ENCODE measurements at regions of chr7 and their contacts with region 1.

Region 1: GRCh38 chr7:64562626-64563275 is at the start of gene ZNF680:
- DNase-seq: peak; percentile 79 to 95 (median 84)
- ATAC-seq: peak; percentile 98
- H3K4me3 ChIP-seq: peak within 1 kb of the TSS; percentile 93
- H3K4me3 Mint-ChIP-seq: peak within 1 kb of the TSS; percentile 100
- H3K27ac ChIP-seq: peak within 1 kb of the TSS; percentile 41
- H3K27ac Mint-ChIP-seq: peak within 1 kb of the TSS; percentile 88
- H3K4me1 ChIP-seq: peaks cover 21% of the 10 kb centered on the region
- H3K4me1 Mint-ChIP-seq: peaks cover 41% of the 10 kb centered on the region
- H3K27me3 ChIP-seq: no peaks in the 10 kb centered on the region
- H3K27me3 Mint-ChIP-seq: no peaks in the 10 kb centered on the region
- CTCF ChIP-seq: no peak
- total RNA-seq, gene ZNF680: 8.3 to 8.9 TPM

Region 2: GRCh38 chr7:64650971-64651781 is 88.4 kb after region 1 on chr7:
- CTCF ChIA-PET with region 1: no interaction called
- POLR2A ChIA-PET with region 1: no interaction called
- intact Hi-C with region 1: no loop called
- DNase-seq: no peak
- ATAC-seq: no peak
- H3K4me3 ChIP-seq: no peak overlapping the region
- H3K4me3 Mint-ChIP-seq: no peak overlapping the region
- H3K27ac ChIP-seq: no peak overlapping the region
- H3K27ac Mint-ChIP-seq: no peak overlapping the region
- H3K4me1 ChIP-seq: no peaks in the 10 kb centered on the region
- H3K4me1 Mint-ChIP-seq: no peaks in the 10 kb centered on the region
- H3K27me3 ChIP-seq: no peaks in the 10 kb centered on the region
- H3K27me3 Mint-ChIP-seq: no peaks in the 10 kb centered on the region
- CTCF ChIP-seq: no peak

Region 3: DNA sequence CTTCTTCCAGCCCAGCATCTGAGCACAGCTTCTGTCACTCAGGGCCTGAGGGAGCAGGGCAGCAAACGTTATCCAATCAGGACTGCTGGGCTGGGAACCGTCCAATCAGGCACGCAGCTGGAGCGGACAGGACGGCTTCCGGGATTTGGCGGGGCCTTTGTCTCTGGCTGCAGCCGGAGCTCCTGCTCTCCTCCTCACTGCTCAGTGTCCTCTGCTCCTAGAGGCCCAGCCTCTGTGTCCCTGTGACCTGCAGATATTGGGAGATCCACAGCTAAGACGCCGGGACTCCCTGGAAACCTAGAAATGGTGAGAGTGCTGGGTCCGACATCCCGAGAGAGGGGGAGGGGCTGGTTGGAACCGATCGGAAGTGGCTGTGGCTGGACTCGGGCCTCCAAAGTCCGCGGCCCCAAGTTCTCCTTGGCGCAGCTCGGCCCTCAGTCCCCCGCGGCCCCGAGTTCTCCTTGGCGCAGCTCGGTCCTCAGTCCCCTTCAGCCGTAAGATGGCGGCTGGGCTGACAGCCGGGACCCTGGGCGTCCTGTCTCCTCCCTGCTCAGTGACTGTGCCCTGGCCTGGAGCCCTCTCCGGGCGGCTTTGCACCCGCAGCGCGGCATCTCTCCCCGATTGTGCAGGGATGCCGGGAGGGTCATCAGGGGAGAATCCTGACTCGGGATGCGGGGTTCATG is 103.4 kb after region 1 on chr7 and contains the start of gene ZNF107:
- CTCF ChIA-PET with region 1: no interaction called
- POLR2A ChIA-PET with region 1: interaction called, 47 read pairs
- intact Hi-C with region 1: loop called (anchors 5 kb)
- DNase-seq: peak; percentile 71 to 96 (median 79)
- ATAC-seq: peak; percentile 95
- H3K4me3 ChIP-seq: peak within 1 kb of the TSS; percentile 83
- H3K4me3 Mint-ChIP-seq: peak within 1 kb of the TSS; percentile 98
- H3K27ac ChIP-seq: peak within 1 kb of the TSS; percentile 82
- H3K27ac Mint-ChIP-seq: peak within 1 kb of the TSS; percentile 98
- H3K4me1 ChIP-seq: peaks cover 23% of the 10 kb centered on the region
- H3K4me1 Mint-ChIP-seq: peaks cover 76% of the 10 kb centered on the region
- H3K27me3 ChIP-seq: no peaks in the 10 kb centered on the region
- H3K27me3 Mint-ChIP-seq: no peaks in the 10 kb centered on the region
- CTCF ChIP-seq: no peak
- total RNA-seq, gene ZNF107: 12.4 TPM

Region 4: DNA sequence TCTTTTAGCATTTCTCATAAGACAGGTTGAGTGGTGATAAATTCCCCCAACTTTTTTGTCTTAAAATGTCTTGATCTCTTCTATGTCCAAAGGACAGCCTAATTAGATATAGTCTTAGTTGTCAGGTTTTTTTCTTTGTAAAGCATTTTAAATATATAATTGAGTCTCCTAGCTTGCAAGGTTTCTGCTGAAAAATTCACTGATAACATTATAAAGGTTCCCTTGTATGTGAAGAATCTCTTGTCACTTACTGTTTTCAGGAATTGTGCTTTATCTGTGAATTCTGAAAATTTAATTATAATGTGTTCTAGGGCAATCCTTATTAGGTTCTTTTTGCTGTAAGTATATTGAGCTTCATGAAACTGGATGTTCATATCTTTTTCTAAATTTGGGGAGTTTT is 714.1 kb after region 1 on chr7:
- CTCF ChIA-PET with region 1: no interaction called
- POLR2A ChIA-PET with region 1: no interaction called
- intact Hi-C with region 1: no loop called
- DNase-seq: no peak
- ATAC-seq: no peak
- H3K4me3 ChIP-seq: no peak overlapping the region
- H3K4me3 Mint-ChIP-seq: no peak overlapping the region
- H3K27ac ChIP-seq: no peak overlapping the region
- H3K27ac Mint-ChIP-seq: no peak overlapping the region
- H3K4me1 ChIP-seq: no peaks in the 10 kb centered on the region
- H3K4me1 Mint-ChIP-seq: no peaks in the 10 kb centered on the region
- H3K27me3 ChIP-seq: peaks cover 5 to 19% of the 10 kb centered on the region in 2 experiments
- H3K27me3 Mint-ChIP-seq: peaks cover 56% of the 10 kb centered on the region
- CTCF ChIP-seq: no peak

Measured in CD4-positive, alpha-beta T cell (primary cell).